ENCODE measurements at regions of chr15 and their contacts with region 1.

Region 1: DNA sequence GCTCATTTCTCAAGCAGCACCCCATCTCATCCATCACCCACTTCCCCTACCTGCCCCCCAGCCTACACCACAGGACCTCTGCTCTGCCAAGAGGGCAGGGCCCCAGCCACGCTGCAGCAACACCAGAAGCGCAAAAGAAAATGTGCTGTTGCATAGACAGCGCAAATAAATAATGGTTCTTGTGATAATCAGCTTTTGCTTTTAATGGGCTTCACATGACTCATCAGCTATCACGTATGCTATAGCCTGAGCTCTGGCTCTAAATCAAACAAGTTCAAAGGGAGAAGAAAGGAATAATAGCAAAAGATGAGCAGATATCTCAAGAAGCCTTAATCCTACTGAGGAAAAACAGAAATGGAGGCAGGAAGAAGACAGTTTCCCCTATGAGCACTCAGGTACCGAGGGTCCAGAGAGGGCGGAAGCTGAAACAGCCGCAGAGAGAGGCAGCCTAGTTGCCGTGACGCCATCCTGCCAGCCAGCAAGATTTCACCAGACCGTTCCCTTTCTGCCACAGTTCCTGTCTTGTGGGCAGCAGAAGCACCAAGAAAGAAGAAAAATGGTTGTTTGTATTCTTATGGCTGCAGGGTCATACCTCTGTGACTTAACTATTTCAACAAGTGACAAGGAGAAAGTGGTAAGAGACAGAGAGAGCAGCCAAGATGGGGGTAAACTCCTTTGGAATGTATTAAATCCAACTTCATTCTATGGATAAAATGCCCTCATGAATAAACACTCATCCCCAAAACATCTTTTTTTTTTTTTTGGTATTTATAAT is 22.0 kb downstream of the RAB27A start:
- DNase-seq: peak; percentile 54 to 93 (median 82)
- ATAC-seq: peak; percentile 83
- H3K4me3 ChIP-seq: peak overlapping the region; percentile 14 to 27
- H3K4me3 Mint-ChIP-seq: peak overlapping the region; percentile 68
- H3K27ac ChIP-seq: peak overlapping the region; percentile 68 to 89
- H3K27ac Mint-ChIP-seq: peak overlapping the region; percentile 96
- H3K4me1 ChIP-seq: peaks cover 55% of the 10 kb centered on the region
- H3K4me1 Mint-ChIP-seq: peaks cover 77% of the 10 kb centered on the region
- H3K27me3 ChIP-seq: no peaks in the 10 kb centered on the region
- H3K27me3 Mint-ChIP-seq: no peaks in the 10 kb centered on the region
- CTCF ChIP-seq: no peak

Region 2: DNA sequence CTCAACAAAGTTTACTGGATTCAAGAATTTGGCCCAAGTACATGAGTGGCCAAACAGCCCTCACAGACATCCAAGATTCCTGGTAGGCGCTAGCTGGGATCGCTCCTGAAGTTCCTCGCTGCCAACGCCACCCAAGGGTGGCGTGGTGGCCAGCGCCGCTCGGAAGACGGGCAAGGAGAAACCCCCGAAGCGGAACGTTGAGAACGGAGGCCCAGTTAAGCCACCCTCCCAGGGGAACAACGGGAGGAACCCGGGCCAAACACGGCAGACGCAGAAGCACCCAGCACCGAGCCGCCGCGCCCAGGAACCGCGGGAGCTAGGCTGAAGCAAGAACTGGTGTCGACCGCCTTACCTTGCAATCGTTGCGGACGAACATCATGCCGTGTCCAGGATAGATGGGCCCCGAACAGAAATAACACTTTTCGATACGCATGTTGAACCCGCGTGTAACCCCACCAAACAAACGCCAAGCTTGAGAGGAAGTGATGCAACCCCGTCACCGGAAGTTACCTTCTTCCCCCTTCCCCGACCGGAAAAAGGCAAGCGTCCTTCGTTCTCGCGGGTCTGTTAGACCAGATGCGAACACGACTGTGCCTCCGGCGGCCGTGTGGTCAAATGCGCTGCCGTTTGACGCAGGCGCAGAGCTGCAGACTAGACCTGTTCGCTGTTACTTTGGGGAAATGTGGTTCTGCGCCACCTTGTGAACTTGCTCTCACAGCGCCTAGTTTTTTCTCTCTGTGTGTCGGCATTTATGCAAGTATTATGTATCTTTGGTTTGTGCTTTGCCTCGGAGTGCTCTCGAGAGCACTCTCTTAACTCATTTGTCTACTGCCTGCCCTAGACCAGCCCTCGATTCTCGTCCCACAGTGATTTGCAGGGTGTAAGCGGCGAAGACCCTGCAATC is 70.9 kb before region 1 on chr15 and contains the start of gene RSL24D1:
- CTCF ChIA-PET with region 1: interaction called, 5 read pairs
- POLR2A ChIA-PET with region 1: interaction called, 16 read pairs
- intact Hi-C with region 1: no loop called
- DNase-seq: peak; percentile 92 to 100 (median 96)
- ATAC-seq: peak; percentile 95
- H3K4me3 ChIP-seq: peak within 1 kb of the TSS; percentile 82 to 90
- H3K4me3 Mint-ChIP-seq: no peak within 1 kb of the TSS
- H3K27ac ChIP-seq: peak within 1 kb of the TSS; percentile 94
- H3K27ac Mint-ChIP-seq: no peak within 1 kb of the TSS
- H3K4me1 ChIP-seq: peaks cover 37% of the 10 kb centered on the region
- H3K4me1 Mint-ChIP-seq: peaks cover 21% of the 10 kb centered on the region
- H3K27me3 ChIP-seq: no peaks in the 10 kb centered on the region
- H3K27me3 Mint-ChIP-seq: no peaks in the 10 kb centered on the region
- CTCF ChIP-seq: no peak
- total RNA-seq, gene RSL24D1: 181 to 186 TPM

Region 3: GRCh38 chr15:55221090-55222011 is 46.2 kb before region 1 on chr15:
- CTCF ChIA-PET with region 1: interaction called, 4 read pairs
- POLR2A ChIA-PET with region 1: interaction called, 7 read pairs
- intact Hi-C with region 1: loop called in 1 of 2 experiments (anchors 1 kb)
- DNase-seq: peak in 4 of 9 experiments; percentile 25 to 64 (median 36)
- ATAC-seq: peak; percentile 27
- H3K4me3 ChIP-seq: no peak overlapping the region
- H3K4me3 Mint-ChIP-seq: peak overlapping the region; percentile 0
- H3K27ac ChIP-seq: peak overlapping the region in 1 of 2 experiments; percentile 66
- H3K27ac Mint-ChIP-seq: peak overlapping the region; percentile 85
- H3K4me1 ChIP-seq: peaks cover 52% of the 10 kb centered on the region
- H3K4me1 Mint-ChIP-seq: peaks cover 59% of the 10 kb centered on the region
- H3K27me3 ChIP-seq: no peaks in the 10 kb centered on the region
- H3K27me3 Mint-ChIP-seq: no peaks in the 10 kb centered on the region
- CTCF ChIP-seq: no peak

Region 4: DNA sequence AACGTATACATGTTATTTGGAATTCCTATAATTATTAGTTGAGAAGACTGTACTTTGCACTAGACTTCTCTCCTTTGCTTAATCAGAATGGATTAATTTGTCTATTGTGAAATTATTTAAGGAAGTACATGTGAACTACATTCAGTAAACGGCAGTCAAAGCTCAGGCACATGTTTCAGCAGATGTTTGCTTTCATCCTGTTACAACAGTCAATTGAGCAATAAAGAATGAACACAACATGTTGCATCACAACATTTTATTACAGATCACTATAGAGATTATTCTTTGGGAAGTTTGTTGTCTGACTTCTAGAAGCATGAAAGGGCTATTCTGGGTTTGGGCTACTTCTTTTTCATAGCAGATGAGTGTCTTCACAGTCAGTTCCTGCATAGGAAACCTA is 17.2 kb before region 1 on chr15:
- CTCF ChIA-PET with region 1: interaction called, 9 read pairs
- POLR2A ChIA-PET with region 1: interaction called, 18 read pairs
- intact Hi-C with region 1: loop called in 1 of 2 experiments (anchors 2 kb)
- DNase-seq: peak in 1 of 9 experiments; percentile 32
- ATAC-seq: no peak
- H3K4me3 ChIP-seq: no peak overlapping the region
- H3K4me3 Mint-ChIP-seq: peak overlapping the region; percentile 44
- H3K27ac ChIP-seq: peak overlapping the region in 1 of 2 experiments; percentile 60
- H3K27ac Mint-ChIP-seq: peak overlapping the region; percentile 86
- H3K4me1 ChIP-seq: peaks cover 48% of the 10 kb centered on the region
- H3K4me1 Mint-ChIP-seq: peaks cover 75% of the 10 kb centered on the region
- H3K27me3 ChIP-seq: no peaks in the 10 kb centered on the region
- H3K27me3 Mint-ChIP-seq: no peaks in the 10 kb centered on the region
- CTCF ChIP-seq: no peak

Region 5: DNA sequence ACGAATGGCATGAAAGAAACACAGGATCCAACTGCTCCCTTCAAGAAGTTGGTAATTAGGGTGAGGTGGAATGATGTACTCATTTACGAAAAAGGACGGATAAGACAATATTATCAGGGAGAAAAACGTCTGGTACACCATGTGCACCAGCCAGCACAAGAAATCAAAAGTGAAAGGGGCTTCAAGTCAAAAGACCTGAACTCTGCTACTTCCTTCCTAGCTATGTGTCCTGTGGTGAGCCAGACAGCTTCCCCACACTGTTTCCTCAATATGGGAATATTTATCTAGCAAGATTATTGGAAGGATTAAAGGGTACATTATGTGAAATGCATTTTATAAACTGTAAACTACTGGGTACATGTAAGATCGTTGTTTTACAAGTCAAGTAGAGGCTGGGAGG is 11.9 kb before region 1 on chr15:
- CTCF ChIA-PET with region 1: interaction called, 9 read pairs
- POLR2A ChIA-PET with region 1: interaction called, 18 read pairs
- intact Hi-C with region 1: loop called in 1 of 2 experiments (anchors 1 kb)
- DNase-seq: peak in 3 of 9 experiments; percentile 20 to 74 (median 56)
- ATAC-seq: peak; percentile 61
- H3K4me3 ChIP-seq: peak overlapping the region; percentile 34 to 50
- H3K4me3 Mint-ChIP-seq: peak overlapping the region; percentile 89
- H3K27ac ChIP-seq: peak overlapping the region; percentile 45 to 87
- H3K27ac Mint-ChIP-seq: peak overlapping the region; percentile 94
- H3K4me1 ChIP-seq: peaks cover 53% of the 10 kb centered on the region
- H3K4me1 Mint-ChIP-seq: peaks cover 79% of the 10 kb centered on the region
- H3K27me3 ChIP-seq: no peaks in the 10 kb centered on the region
- H3K27me3 Mint-ChIP-seq: no peaks in the 10 kb centered on the region
- CTCF ChIP-seq: no peak

Region 6: GRCh38 chr15:55279746-55280351 is 12.3 kb after region 1 on chr15:
- CTCF ChIA-PET with region 1: interaction called, 5 read pairs
- POLR2A ChIA-PET with region 1: interaction called, 21 read pairs
- intact Hi-C with region 1: loop called (anchors 1 to 2 kb)
- DNase-seq: peak in 7 of 9 experiments; percentile 37 to 86 (median 68)
- ATAC-seq: peak; percentile 64
- H3K4me3 ChIP-seq: no peak overlapping the region
- H3K4me3 Mint-ChIP-seq: peak overlapping the region; percentile 44
- H3K27ac ChIP-seq: peak overlapping the region; percentile 2 to 87
- H3K27ac Mint-ChIP-seq: peak overlapping the region; percentile 86
- H3K4me1 ChIP-seq: peaks cover 77% of the 10 kb centered on the region
- H3K4me1 Mint-ChIP-seq: peaks cover 95% of the 10 kb centered on the region
- H3K27me3 ChIP-seq: no peaks in the 10 kb centered on the region
- H3K27me3 Mint-ChIP-seq: no peaks in the 10 kb centered on the region
- CTCF ChIP-seq: no peak

Region 7: GRCh38 chr15:55318588-55319494 is 51.3 kb after region 1 on chr15 and contains the starts of genes PIGB and PIGBOS1:
- CTCF ChIA-PET with region 1: no interaction called
- POLR2A ChIA-PET with region 1: interaction called, 15 read pairs
- intact Hi-C with region 1: no loop called
- DNase-seq: peak; percentile 59 to 90 (median 79)
- ATAC-seq: peak; percentile 88
- H3K4me3 ChIP-seq: peak within 1 kb of the TSS; percentile 80 to 98
- H3K4me3 Mint-ChIP-seq: peak within 1 kb of the TSS; percentile 98
- H3K27ac ChIP-seq: peak within 1 kb of the TSS; percentile 95 to 99
- H3K27ac Mint-ChIP-seq: peak within 1 kb of the TSS; percentile 100
- H3K4me1 ChIP-seq: peaks cover 39% of the 10 kb centered on the region
- H3K4me1 Mint-ChIP-seq: peaks cover 81% of the 10 kb centered on the region
- H3K27me3 ChIP-seq: no peaks in the 10 kb centered on the region
- H3K27me3 Mint-ChIP-seq: no peaks in the 10 kb centered on the region
- CTCF ChIP-seq: no peak
- total RNA-seq, gene PIGB: 17.8 to 19.2 TPM
- total RNA-seq, gene PIGBOS1: 6.4 to 6.8 TPM

Region 8: GRCh38 chr15:55703873-55704285 is 436.3 kb after region 1 on chr15:
- CTCF ChIA-PET with region 1: no interaction called
- POLR2A ChIA-PET with region 1: no interaction called
- intact Hi-C with region 1: no loop called
- DNase-seq: peak in 1 of 9 experiments; percentile 14
- ATAC-seq: no peak
- H3K4me3 ChIP-seq: no peak overlapping the region
- H3K4me3 Mint-ChIP-seq: no peak overlapping the region
- H3K27ac ChIP-seq: no peak overlapping the region
- H3K27ac Mint-ChIP-seq: no peak overlapping the region
- H3K4me1 ChIP-seq: no peaks in the 10 kb centered on the region
- H3K4me1 Mint-ChIP-seq: peaks cover 6% of the 10 kb centered on the region
- H3K27me3 ChIP-seq: no peaks in the 10 kb centered on the region
- H3K27me3 Mint-ChIP-seq: peaks cover 5% of the 10 kb centered on the region
- CTCF ChIP-seq: no peak

Region 9: DNA sequence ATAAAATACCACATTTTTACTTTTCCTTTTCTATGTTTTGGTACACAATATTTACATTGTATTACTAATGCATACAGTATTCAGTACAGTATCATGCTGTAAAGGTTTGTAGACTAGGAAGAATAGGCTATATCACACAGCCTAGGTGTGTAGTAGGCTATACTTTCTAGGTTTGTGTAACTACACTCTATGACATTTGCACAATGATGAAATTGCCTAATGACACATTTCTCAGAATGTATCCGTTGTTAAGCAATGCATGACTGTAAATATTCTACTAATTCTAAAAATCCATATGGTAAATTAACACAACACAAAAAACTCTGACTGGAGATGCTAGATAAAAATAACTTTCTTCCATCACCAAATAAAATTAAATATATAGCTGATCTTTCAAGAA is 709.6 kb after region 1 on chr15:
- CTCF ChIA-PET with region 1: no interaction called
- POLR2A ChIA-PET with region 1: no interaction called
- intact Hi-C with region 1: no loop called
- DNase-seq: no peak
- ATAC-seq: no peak
- H3K4me3 ChIP-seq: no peak overlapping the region
- H3K4me3 Mint-ChIP-seq: no peak overlapping the region
- H3K27ac ChIP-seq: no peak overlapping the region
- H3K27ac Mint-ChIP-seq: no peak overlapping the region
- H3K4me1 ChIP-seq: no peaks in the 10 kb centered on the region
- H3K4me1 Mint-ChIP-seq: no peaks in the 10 kb centered on the region
- H3K27me3 ChIP-seq: no peaks in the 10 kb centered on the region
- H3K27me3 Mint-ChIP-seq: no peaks in the 10 kb centered on the region
- CTCF ChIP-seq: no peak

Measured in CD8-positive, alpha-beta T cell (primary cell).